Calu3 (cell line): ENCODE measurements at regions of chr2 and their contacts with region 1.

Region 1: DNA sequence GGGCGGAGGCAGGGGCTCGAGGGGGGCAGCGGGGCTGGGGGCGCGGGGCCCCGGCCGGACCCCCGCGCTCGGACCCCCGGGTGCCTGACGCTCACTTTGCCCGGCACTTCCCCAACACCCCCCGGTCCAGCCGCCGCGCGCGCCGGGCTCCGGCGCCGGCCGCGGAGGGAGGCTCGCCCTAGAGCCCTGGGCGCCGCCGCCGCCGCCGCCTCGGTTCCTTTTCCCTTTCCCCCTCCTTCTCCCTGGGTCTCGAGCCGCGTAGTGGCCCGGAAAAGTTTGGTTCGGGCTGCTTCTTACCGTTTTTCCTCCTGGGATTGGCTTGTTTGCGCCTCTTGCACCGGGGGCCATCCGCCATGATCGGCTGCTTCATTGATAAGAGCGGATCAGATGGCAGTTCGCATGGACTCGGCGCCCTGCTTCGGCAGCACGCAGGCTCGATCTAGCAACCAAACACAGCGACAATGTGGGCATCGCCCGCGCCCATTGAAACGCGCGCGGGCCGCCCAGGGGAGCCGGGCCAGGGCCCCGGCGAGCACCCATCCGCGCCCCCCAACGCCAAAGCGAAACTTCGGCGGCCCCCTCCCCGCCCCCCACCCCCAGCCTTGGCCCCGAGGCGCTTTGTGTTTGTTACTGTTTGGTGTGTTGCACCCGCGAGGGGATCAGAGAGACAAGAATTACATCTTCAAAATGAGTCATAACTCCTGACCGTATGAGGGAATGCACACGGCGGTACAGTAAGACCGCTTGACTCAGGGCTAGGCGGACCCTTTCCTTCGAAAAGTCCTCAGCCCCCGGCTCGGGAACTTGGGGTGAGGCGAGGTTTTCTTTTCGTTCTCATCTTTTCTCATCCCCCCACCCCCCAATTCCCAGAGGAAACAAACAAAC is 2.7 kb downstream of the ZEB2 start:
- DNase-seq: peak; percentile 26
- H3K4me3 Mint-ChIP-seq: no peak overlapping the region
- H3K27ac Mint-ChIP-seq: no peak overlapping the region
- H3K4me1 Mint-ChIP-seq: peaks cover under 1% of the 10 kb centered on the region
- H3K27me3 Mint-ChIP-seq: no peaks in the 10 kb centered on the region
- CTCF ChIP-seq: no peak

Region 2: GRCh38 chr2:143582046-143582747 is 935.0 kb before region 1 on chr2:
- CTCF ChIA-PET with region 1: no interaction called
- intact Hi-C with region 1: loop called (anchors 2 kb)
- DNase-seq: no peak
- H3K4me3 Mint-ChIP-seq: no peak overlapping the region
- H3K27ac Mint-ChIP-seq: no peak overlapping the region
- H3K4me1 Mint-ChIP-seq: peaks cover 18% of the 10 kb centered on the region
- H3K27me3 Mint-ChIP-seq: no peaks in the 10 kb centered on the region
- CTCF ChIP-seq: no peak

Region 3: GRCh38 chr2:144320491-144320890 is 196.7 kb before region 1 on chr2:
- CTCF ChIA-PET with region 1: no interaction called
- intact Hi-C with region 1: loop called (anchors 10 kb)
- DNase-seq: peak; percentile 36
- H3K4me3 Mint-ChIP-seq: no peak overlapping the region
- H3K27ac Mint-ChIP-seq: no peak overlapping the region
- H3K4me1 Mint-ChIP-seq: peaks cover 30% of the 10 kb centered on the region
- H3K27me3 Mint-ChIP-seq: no peaks in the 10 kb centered on the region
- CTCF ChIP-seq: no peak

Region 4: DNA sequence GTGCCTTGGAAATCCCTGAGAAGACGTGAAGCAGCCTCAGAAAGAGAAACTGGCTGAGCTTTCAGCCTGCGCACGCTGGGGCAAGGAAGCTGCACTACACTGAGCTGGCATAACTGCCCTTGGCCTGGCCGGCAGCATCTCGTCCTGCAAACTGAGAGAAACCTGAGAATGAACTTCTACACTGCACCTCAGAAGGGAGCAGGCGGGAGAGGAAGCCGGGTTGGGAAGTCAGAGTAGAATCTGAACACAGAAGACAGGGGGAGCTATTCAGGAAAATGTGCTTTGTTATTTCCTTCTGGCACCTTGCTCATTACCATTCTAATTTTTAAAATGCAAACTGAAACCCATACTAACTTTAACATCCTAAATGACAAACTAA is 68.2 kb before region 1 on chr2:
- CTCF ChIA-PET with region 1: no interaction called
- intact Hi-C with region 1: no loop called
- DNase-seq: no peak
- H3K4me3 Mint-ChIP-seq: no peak overlapping the region
- H3K27ac Mint-ChIP-seq: no peak overlapping the region
- H3K4me1 Mint-ChIP-seq: no peaks in the 10 kb centered on the region
- H3K27me3 Mint-ChIP-seq: no peaks in the 10 kb centered on the region
- CTCF ChIP-seq: no peak

Region 5: GRCh38 chr2:144539289-144539782 is 22.1 kb after region 1 on chr2:
- CTCF ChIA-PET with region 1: no interaction called
- intact Hi-C with region 1: no loop called
- DNase-seq: no peak
- H3K4me3 Mint-ChIP-seq: no peak overlapping the region
- H3K27ac Mint-ChIP-seq: no peak overlapping the region
- H3K4me1 Mint-ChIP-seq: no peaks in the 10 kb centered on the region
- H3K27me3 Mint-ChIP-seq: no peaks in the 10 kb centered on the region
- CTCF ChIP-seq: no peak

Region 6: DNA sequence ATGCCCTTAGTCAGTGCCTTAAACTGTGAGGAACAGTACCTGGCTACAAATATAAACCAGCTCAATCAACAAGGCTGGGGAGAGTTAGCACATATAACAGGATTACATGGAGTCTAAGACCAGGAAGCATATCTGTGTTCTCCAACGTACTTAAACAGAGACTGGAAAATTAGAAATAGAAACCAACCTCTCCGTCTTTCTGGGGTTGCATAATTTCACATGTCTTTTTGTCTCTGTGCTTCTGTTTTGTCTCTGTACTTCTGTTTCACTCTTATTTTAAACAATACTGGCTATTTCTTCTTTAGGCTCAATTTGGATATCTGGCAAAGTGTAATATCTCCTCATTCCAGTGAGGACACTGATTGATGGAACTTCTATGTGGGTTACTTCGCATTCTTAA is 751.7 kb after region 1 on chr2:
- CTCF ChIA-PET with region 1: interaction called, 11 read pairs
- intact Hi-C with region 1: no loop called
- DNase-seq: no peak
- H3K4me3 Mint-ChIP-seq: no peak overlapping the region
- H3K27ac Mint-ChIP-seq: no peak overlapping the region
- H3K4me1 Mint-ChIP-seq: no peaks in the 10 kb centered on the region
- H3K27me3 Mint-ChIP-seq: no peaks in the 10 kb centered on the region
- CTCF ChIP-seq: no peak